Panc1 (cell line): ENCODE measurements at regions of chr14 and their contacts with region 1.

Region 1: GRCh38 chr14:20652996-20653975 is 11.8 kb upstream of the OR6S1 start:
- DNase-seq: peak; percentile 96
- ATAC-seq: peak; percentile 89
- H3K4me3 ChIP-seq: peak overlapping the region; percentile 43 to 60
- H3K27ac ChIP-seq: no peak overlapping the region
- H3K4me1 ChIP-seq: no peaks in the 10 kb centered on the region; the same call in 1 of the 2 replicates
- H3K27me3 ChIP-seq: no peaks in the 10 kb centered on the region
- CTCF ChIP-seq: no peak

Region 2: GRCh38 chr14:20690848-20691523 is 37.7 kb after region 1 on chr14:
- CTCF ChIA-PET with region 1: interaction called, 6 read pairs
- POLR2A ChIA-PET with region 1: no interaction called
- in situ Hi-C with region 1: no loop called
- intact Hi-C with region 1: loop called (anchors 5 kb)
- DNase-seq: peak; percentile 60
- ATAC-seq: peak; percentile 90
- H3K4me3 ChIP-seq: no peak overlapping the region
- H3K27ac ChIP-seq: no peak overlapping the region
- H3K4me1 ChIP-seq: peaks cover 3% of the 10 kb centered on the region; the same call in 1 of the 2 replicates
- H3K27me3 ChIP-seq: no peaks in the 10 kb centered on the region
- CTCF ChIP-seq: peak; percentile 77